IMR-90 (cell line): ENCODE measurements at regions of chr5 and their contacts with region 1.

Region 1: GRCh38 chr5:33423018-33423630 is 17.6 kb upstream of the TARS1 start:
- DNase-seq: peak; percentile 73
- ATAC-seq: peak; percentile 79
- H3K4me3 ChIP-seq: no peak overlapping the region
- H3K27ac ChIP-seq: no peak overlapping the region
- H3K4me1 ChIP-seq: no peaks in the 10 kb centered on the region; the same call in 1 of the 2 replicates
- H3K27me3 ChIP-seq: no peaks in the 10 kb centered on the region
- CTCF ChIP-seq: peak; percentile 66
- POLR2A ChIP-seq: no peak
- RAD21 ChIP-seq: peak; percentile 71

Region 2: DNA sequence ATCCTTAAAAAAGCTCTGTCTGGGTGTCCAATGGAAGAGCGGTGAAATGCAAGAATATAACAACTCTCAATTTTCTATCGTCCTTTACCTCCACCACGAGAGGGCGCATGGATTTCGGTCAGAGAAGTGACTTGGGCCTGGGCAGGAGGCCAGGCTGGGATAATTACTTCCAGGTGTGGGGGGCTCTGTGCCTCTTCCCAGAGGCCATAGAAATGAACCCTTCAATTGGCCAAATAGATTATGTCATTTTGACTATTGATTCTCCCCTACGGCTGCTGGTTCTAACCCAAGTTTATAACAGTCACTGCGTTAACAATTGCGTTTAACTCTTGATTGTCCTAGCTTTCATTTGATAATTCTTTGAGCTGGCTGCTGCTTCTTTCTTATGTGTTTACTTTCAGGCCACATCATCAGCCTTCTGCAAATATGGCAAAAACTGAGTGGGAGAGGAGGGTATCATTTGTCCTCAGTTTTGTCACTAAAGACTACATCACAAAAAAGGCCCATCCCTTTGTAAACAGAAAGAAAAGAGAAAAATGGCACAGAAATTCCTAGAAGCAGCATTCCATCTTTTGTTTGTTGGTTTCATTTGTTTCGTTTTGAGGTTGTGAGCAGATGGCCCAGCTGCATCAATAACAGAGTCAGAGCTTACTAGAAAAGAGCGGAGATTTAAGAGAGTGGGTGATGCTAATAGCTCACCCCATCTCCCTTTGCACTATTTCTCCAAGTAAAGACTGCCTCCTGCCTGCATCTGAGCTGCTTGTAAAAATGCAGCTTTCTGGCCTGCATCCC is 933.1 kb before region 1 on chr5:
- CTCF ChIA-PET with region 1: no interaction called
- POLR2A ChIA-PET with region 1: no interaction called
- dilution Hi-C with region 1: no loop called
- in situ Hi-C with region 1: loop called (anchors 10 kb)
- intact Hi-C with region 1: no loop called
- DNase-seq: peak; percentile 87
- ATAC-seq: peak; percentile 86
- H3K4me3 ChIP-seq: no peak overlapping the region
- H3K27ac ChIP-seq: peak overlapping the region; percentile 53; the same call in 1 of the 2 replicates
- H3K4me1 ChIP-seq: no peaks in the 10 kb centered on the region
- H3K27me3 ChIP-seq: no peaks in the 10 kb centered on the region
- CTCF ChIP-seq: peak; percentile 78
- POLR2A ChIP-seq: no peak
- RAD21 ChIP-seq: peak; percentile 81

Region 3: GRCh38 chr5:32504989-32505596 is 918.0 kb before region 1 on chr5:
- CTCF ChIA-PET with region 1: no interaction called
- POLR2A ChIA-PET with region 1: no interaction called
- dilution Hi-C with region 1: no loop called
- in situ Hi-C with region 1: no loop called
- intact Hi-C with region 1: loop called (anchors 10 kb)
- DNase-seq: peak; percentile 94
- ATAC-seq: peak; percentile 87
- H3K4me3 ChIP-seq: no peak overlapping the region
- H3K27ac ChIP-seq: peak overlapping the region; percentile 80; the same call in 1 of the 2 replicates
- H3K4me1 ChIP-seq: peaks cover 30% of the 10 kb centered on the region
- H3K27me3 ChIP-seq: 0 out of 2 replicates have a peak, but pooled peaks cover 4% of the 10 kb centered on the region
- CTCF ChIP-seq: no peak
- POLR2A ChIP-seq: no peak
- RAD21 ChIP-seq: no peak

Region 4: GRCh38 chr5:32585446-32586275 is 837.5 kb before region 1 on chr5 and contains the start of gene SUB1:
- CTCF ChIA-PET with region 1: no interaction called
- POLR2A ChIA-PET with region 1: no interaction called
- dilution Hi-C with region 1: no loop called
- in situ Hi-C with region 1: no loop called
- intact Hi-C with region 1: loop called (anchors 5 kb)
- DNase-seq: peak; percentile 90
- ATAC-seq: peak; percentile 86
- H3K4me3 ChIP-seq: peak within 1 kb of the TSS; percentile 89
- H3K27ac ChIP-seq: peak within 1 kb of the TSS; percentile 91
- H3K4me1 ChIP-seq: peaks cover 4% of the 10 kb centered on the region
- H3K27me3 ChIP-seq: no peaks in the 10 kb centered on the region
- CTCF ChIP-seq: 0 out of 2 replicates have a peak, but pooled peaks have one; percentile 18
- POLR2A ChIP-seq: peak; percentile 92
- RAD21 ChIP-seq: no peak; the same call in 1 of the 2 replicates
- total RNA-seq, gene SUB1: 19.5 and 90.5 TPM in 2 replicates

Region 5: DNA sequence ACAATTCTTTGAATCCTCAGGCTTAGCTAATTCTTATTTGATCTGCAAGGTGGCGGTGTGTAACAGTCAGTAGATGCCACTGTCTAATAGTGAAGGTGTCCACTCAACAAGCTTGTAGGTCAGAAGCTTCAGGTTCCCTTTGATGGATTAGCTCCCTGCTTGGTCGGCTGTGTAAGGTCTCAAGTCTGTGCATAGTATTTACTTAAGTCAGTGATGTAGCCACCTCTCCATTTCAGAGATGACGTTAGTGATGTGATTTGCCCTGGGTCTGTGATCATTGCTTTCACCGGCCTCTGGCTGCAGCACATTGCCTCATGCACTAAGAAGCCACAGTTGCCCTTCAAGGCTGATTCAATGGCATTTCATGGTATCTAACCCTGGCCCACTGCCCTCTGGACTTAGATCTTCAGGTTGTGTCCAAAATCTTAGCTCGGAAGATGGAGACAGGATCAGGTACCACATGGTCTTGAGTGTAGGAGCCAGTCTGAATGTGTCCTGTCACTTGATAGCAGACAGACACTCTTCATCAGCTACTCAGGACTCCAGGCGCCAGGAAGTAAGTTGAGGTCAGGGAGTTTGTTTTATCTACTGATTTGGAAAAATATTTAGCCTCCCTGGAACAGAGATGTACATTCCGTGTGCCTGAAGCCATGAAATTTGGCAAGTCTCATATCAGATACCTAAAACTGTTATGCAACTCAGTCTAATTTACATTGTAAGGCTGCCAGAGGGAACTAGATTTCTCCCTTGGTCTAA is 794.9 kb before region 1 on chr5:
- CTCF ChIA-PET with region 1: no interaction called
- POLR2A ChIA-PET with region 1: no interaction called
- dilution Hi-C with region 1: no loop called
- in situ Hi-C with region 1: no loop called
- intact Hi-C with region 1: loop called (anchors 10 kb)
- DNase-seq: peak; percentile 85
- ATAC-seq: peak; percentile 68
- H3K4me3 ChIP-seq: no peak overlapping the region
- H3K27ac ChIP-seq: peak overlapping the region; percentile 56; the same call in 1 of the 2 replicates
- H3K4me1 ChIP-seq: peaks cover 20% of the 10 kb centered on the region
- H3K27me3 ChIP-seq: no peaks in the 10 kb centered on the region
- CTCF ChIP-seq: no peak
- POLR2A ChIP-seq: no peak
- RAD21 ChIP-seq: 0 out of 2 replicates have a peak, but pooled peaks have one; percentile 1

Region 6: DNA sequence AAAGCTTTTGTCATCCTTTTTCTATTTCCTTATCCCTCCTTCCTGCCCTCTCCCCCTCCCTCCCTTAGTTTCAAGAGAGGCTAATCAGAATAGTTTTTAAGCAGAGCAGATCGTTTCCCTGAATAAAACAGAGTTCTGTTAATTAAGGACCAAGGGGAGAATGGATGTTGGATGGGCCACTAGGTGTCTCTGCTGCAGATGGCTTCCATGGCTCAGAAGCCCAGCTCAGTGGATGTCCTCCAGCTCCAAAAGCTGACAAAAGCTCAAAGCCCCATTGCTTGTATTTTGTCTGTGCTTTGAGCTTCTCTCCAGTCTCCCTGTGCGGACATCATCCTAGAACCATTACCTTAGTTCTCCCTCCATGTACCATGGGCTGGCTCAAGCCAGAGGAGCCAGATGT is 733.0 kb before region 1 on chr5:
- CTCF ChIA-PET with region 1: interaction called, 8 read pairs
- POLR2A ChIA-PET with region 1: no interaction called
- dilution Hi-C with region 1: no loop called
- in situ Hi-C with region 1: loop called (anchors 10 kb)
- intact Hi-C with region 1: no loop called
- DNase-seq: no peak
- ATAC-seq: no peak
- H3K4me3 ChIP-seq: no peak overlapping the region
- H3K27ac ChIP-seq: no peak overlapping the region
- H3K4me1 ChIP-seq: peaks cover 9% of the 10 kb centered on the region
- H3K27me3 ChIP-seq: no peaks in the 10 kb centered on the region
- CTCF ChIP-seq: 0 out of 2 replicates have a peak, but pooled peaks have one; percentile 16
- POLR2A ChIP-seq: no peak
- RAD21 ChIP-seq: no peak; the same call in 1 of the 2 replicates

Region 7: GRCh38 chr5:32916648-32917047 is 506.5 kb before region 1 on chr5:
- CTCF ChIA-PET with region 1: no interaction called
- POLR2A ChIA-PET with region 1: no interaction called
- dilution Hi-C with region 1: no loop called
- in situ Hi-C with region 1: no loop called
- intact Hi-C with region 1: loop called (anchors 1 kb)
- DNase-seq: peak; percentile 52
- ATAC-seq: peak; percentile 79
- H3K4me3 ChIP-seq: no peak overlapping the region
- H3K27ac ChIP-seq: no peak overlapping the region
- H3K4me1 ChIP-seq: peaks cover 2% of the 10 kb centered on the region; the same call in 1 of the 2 replicates
- H3K27me3 ChIP-seq: no peaks in the 10 kb centered on the region
- CTCF ChIP-seq: peak; percentile 68
- POLR2A ChIP-seq: no peak
- RAD21 ChIP-seq: peak; percentile 82